PC-9 (cell line): ENCODE measurements at regions of chr2 and their contacts with region 1.

Region 1: GRCh38 chr2:69652221-69652651 is 8.7 kb upstream of the AAK1 start:
- DNase-seq: peak; percentile 51 to 95
- H3K4me3 ChIP-seq: no peak overlapping the region
- H3K27ac ChIP-seq: peak overlapping the region; percentile 75
- H3K4me1 ChIP-seq: peaks cover 19% of the 10 kb centered on the region
- H3K27me3 ChIP-seq: no peaks in the 10 kb centered on the region
- CTCF ChIP-seq: no peak

Region 2: DNA sequence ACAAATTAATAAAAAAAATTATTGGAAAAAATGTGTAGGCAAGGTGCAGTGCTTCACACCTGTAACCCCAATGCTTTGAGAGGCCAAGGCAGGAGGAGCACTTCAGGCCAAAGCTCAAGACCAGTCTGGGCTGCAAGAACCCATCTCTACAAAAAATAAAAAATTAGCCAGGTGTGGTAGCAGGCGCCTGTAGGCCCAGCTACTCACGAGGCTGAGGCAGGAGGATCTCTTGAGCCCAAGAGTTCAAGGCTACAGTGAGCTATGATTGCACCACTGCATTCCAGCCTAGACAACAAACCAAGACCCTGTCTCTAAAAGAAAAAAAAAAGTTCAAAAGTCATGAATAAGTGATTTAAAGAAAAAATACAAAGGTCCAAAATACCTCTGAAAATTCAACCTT is 398.4 kb after region 1 on chr2:
- CTCF ChIA-PET with region 1: interaction called, 10 read pairs
- POLR2A ChIA-PET with region 1: no interaction called
- intact Hi-C with region 1: no loop called
- DNase-seq: no peak
- H3K4me3 ChIP-seq: no peak overlapping the region
- H3K27ac ChIP-seq: no peak overlapping the region
- H3K4me1 ChIP-seq: peaks cover 14% of the 10 kb centered on the region
- H3K27me3 ChIP-seq: no peaks in the 10 kb centered on the region
- CTCF ChIP-seq: no peak